Colonic mucosa (tissue), 4 donors: ENCODE measurements at regions of chr17 and their contacts with region 1.

Region 1: DNA sequence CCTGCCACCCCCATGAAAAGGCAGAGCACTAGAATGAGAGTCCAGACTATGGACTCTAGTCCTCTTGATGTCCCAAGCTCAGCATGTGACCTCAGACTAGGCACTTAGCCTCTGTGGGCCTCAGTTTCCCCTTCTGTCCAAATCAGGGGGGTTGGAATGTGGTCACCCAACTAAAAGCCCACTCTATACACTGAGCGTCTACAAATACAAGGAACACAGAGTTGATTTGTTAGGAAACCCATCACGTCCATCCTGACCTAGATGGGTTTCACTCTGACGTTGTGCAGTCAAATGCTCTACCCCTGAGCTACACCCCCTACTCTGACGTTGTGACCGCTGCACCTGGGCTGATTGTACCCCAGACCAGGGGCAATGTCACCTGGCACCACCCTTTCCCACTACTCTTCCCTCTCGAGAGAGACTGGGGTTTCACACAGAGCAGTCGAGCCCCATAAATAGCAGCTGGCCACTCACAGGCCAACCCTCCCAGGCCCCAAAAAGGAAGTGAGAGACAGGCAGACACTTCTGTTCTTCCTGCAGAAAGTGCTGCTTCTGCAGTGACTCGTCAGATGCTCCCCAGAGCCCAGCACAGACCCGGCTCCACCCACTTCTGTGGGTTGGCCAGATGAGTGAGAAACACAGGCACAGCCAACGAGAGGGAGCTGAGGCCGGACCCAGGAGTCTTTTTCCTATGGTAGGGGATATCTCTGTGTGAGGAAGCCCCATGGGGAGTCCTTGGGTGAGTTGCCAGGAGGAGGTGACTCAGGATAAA is 16.1 kb upstream of the TNFRSF13B start:
- DNase-seq: peak; percentile 59
- H3K4me3 ChIP-seq: no peak overlapping the region
- H3K27ac ChIP-seq: peak overlapping the region; percentile 40
- H3K4me1 ChIP-seq: peaks cover 8% of the 10 kb centered on the region
- H3K27me3 ChIP-seq: no peaks in the 10 kb centered on the region
- CTCF ChIP-seq: no peak

Region 2: GRCh38 chr17:16915752-16916556 is 72.1 kb before region 1 on chr17:
- intact Hi-C with region 1: loop called (anchors 5 kb)
- DNase-seq: peak; percentile 68
- H3K4me3 ChIP-seq: no peak overlapping the region
- H3K27ac ChIP-seq: no peak overlapping the region
- H3K4me1 ChIP-seq: no peaks in the 10 kb centered on the region
- H3K27me3 ChIP-seq: no peaks in the 10 kb centered on the region
- CTCF ChIP-seq: peak; percentile 26

Region 3: GRCh38 chr17:16923904-16924695 is 63.9 kb before region 1 on chr17:
- intact Hi-C with region 1: loop called (anchors 2 kb)
- DNase-seq: no peak
- H3K4me3 ChIP-seq: no peak overlapping the region
- H3K27ac ChIP-seq: no peak overlapping the region
- H3K4me1 ChIP-seq: no peaks in the 10 kb centered on the region
- H3K27me3 ChIP-seq: no peaks in the 10 kb centered on the region
- CTCF ChIP-seq: no peak

Region 4: GRCh38 chr17:17041571-17042380 is 53.8 kb after region 1 on chr17:
- intact Hi-C with region 1: no loop called
- DNase-seq: peak; percentile 99
- H3K4me3 ChIP-seq: peak overlapping the region; percentile 47
- H3K27ac ChIP-seq: peak overlapping the region; percentile 56
- H3K4me1 ChIP-seq: peaks cover 12% of the 10 kb centered on the region
- H3K27me3 ChIP-seq: no peaks in the 10 kb centered on the region
- CTCF ChIP-seq: no peak